ENCODE measurements at regions of chr5 and their contacts with region 1.

Region 1: DNA sequence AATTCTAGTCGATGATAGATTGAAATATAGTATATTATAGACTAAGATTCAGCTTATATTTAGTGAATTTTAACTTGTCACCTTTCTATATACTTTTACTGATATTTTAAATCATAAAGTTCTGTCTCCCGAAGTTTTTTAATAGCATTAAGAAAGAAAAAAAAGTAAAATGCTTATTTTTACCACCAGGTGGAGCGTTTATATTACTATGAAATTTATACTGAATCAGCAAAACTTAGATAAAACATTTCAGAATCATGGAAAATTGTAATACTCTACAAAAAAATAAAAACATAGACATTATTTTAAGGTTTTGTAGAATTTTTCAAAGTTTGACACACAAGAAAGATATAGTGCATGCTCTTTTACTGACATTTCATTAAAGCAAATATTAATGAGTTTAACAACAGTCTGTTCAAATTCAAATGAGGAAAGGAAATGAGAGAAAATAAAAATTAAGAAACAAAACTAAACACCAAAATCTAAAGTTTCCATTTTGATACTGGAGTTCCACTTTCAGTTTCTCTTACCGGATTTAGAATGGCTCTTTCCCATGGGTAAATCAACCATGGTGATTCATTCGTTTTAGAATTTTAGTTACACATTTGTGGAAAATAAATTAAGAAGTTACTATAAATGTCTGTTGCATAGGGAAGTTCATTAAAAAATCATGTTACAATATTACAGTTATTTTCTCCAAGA is 1035.3 kb downstream of the CDH12 start:
- DNase-seq: no peak
- H3K4me3 Mint-ChIP-seq: no peak overlapping the region
- H3K27ac Mint-ChIP-seq: no peak overlapping the region
- H3K4me1 Mint-ChIP-seq: no peaks in the 10 kb centered on the region
- H3K27me3 Mint-ChIP-seq: no peaks in the 10 kb centered on the region
- CTCF ChIP-seq: peak; percentile 35

Region 2: GRCh38 chr5:21910731-21911130 is 92.9 kb after region 1 on chr5:
- CTCF ChIA-PET with region 1: no interaction called
- intact Hi-C with region 1: loop called (anchors 5 kb)
- DNase-seq: no peak
- H3K4me3 Mint-ChIP-seq: no peak overlapping the region
- H3K27ac Mint-ChIP-seq: no peak overlapping the region
- H3K4me1 Mint-ChIP-seq: no peaks in the 10 kb centered on the region
- H3K27me3 Mint-ChIP-seq: no peaks in the 10 kb centered on the region
- CTCF ChIP-seq: no peak

Region 3: GRCh38 chr5:22102823-22103359 is 285.1 kb after region 1 on chr5:
- CTCF ChIA-PET with region 1: no interaction called
- intact Hi-C with region 1: no loop called
- DNase-seq: no peak
- H3K4me3 Mint-ChIP-seq: no peak overlapping the region
- H3K27ac Mint-ChIP-seq: no peak overlapping the region
- H3K4me1 Mint-ChIP-seq: no peaks in the 10 kb centered on the region
- H3K27me3 Mint-ChIP-seq: no peaks in the 10 kb centered on the region
- CTCF ChIP-seq: no peak

Region 4: GRCh38 chr5:22651355-22651754 is 833.5 kb after region 1 on chr5:
- CTCF ChIA-PET with region 1: no interaction called
- intact Hi-C with region 1: loop called (anchors 2 kb)
- DNase-seq: no peak
- H3K4me3 Mint-ChIP-seq: no peak overlapping the region
- H3K27ac Mint-ChIP-seq: no peak overlapping the region
- H3K4me1 Mint-ChIP-seq: peaks cover 9% of the 10 kb centered on the region
- H3K27me3 Mint-ChIP-seq: no peaks in the 10 kb centered on the region
- CTCF ChIP-seq: no peak

Measured in Calu3 (cell line).